ENCODE measurements at regions of chr1 and their contacts with region 1.

Region 1: GRCh38 chr1:162023547-162024501 is at the start of gene OLFML2B:
- DNase-seq: peak in 8 of 9 experiments; percentile 6 to 60 (median 39)
- ATAC-seq: peak; percentile 82
- H3K4me3 ChIP-seq: peak within 1 kb of the TSS; percentile 51 to 68
- H3K4me3 Mint-ChIP-seq: peak within 1 kb of the TSS; percentile 90
- H3K27ac ChIP-seq: no peak within 1 kb of the TSS
- H3K27ac Mint-ChIP-seq: no peak within 1 kb of the TSS
- H3K4me1 ChIP-seq: no peaks in the 10 kb centered on the region
- H3K4me1 Mint-ChIP-seq: peaks cover 12% of the 10 kb centered on the region
- H3K27me3 ChIP-seq: peaks cover 0 to 8% of the 10 kb centered on the region in 2 experiments
- H3K27me3 Mint-ChIP-seq: peaks cover 34% of the 10 kb centered on the region
- CTCF ChIP-seq: no peak
- total RNA-seq, gene OLFML2B: not detected

Region 2: GRCh38 chr1:161792740-161793139 is 231.1 kb before region 1 on chr1:
- CTCF ChIA-PET with region 1: interaction called, 12 read pairs
- POLR2A ChIA-PET with region 1: no interaction called
- intact Hi-C with region 1: no loop called
- DNase-seq: peak in 2 of 9 experiments; percentile 47 to 62
- ATAC-seq: peak; percentile 62
- H3K4me3 ChIP-seq: no peak overlapping the region
- H3K4me3 Mint-ChIP-seq: no peak overlapping the region
- H3K27ac ChIP-seq: no peak overlapping the region
- H3K27ac Mint-ChIP-seq: no peak overlapping the region
- H3K4me1 ChIP-seq: no peaks in the 10 kb centered on the region
- H3K4me1 Mint-ChIP-seq: peaks cover 2% of the 10 kb centered on the region
- H3K27me3 ChIP-seq: no peaks in the 10 kb centered on the region
- H3K27me3 Mint-ChIP-seq: no peaks in the 10 kb centered on the region
- CTCF ChIP-seq: peak; percentile 46

Region 3: GRCh38 chr1:161864577-161864976 is 159.2 kb before region 1 on chr1:
- CTCF ChIA-PET with region 1: interaction called, 6 read pairs
- POLR2A ChIA-PET with region 1: no interaction called
- intact Hi-C with region 1: loop called in 1 of 2 experiments (anchors 5 kb)
- DNase-seq: peak in 2 of 9 experiments; percentile 5 to 36
- ATAC-seq: no peak
- H3K4me3 ChIP-seq: no peak overlapping the region
- H3K4me3 Mint-ChIP-seq: no peak overlapping the region
- H3K27ac ChIP-seq: no peak overlapping the region
- H3K27ac Mint-ChIP-seq: no peak overlapping the region
- H3K4me1 ChIP-seq: no peaks in the 10 kb centered on the region
- H3K4me1 Mint-ChIP-seq: no peaks in the 10 kb centered on the region
- H3K27me3 ChIP-seq: no peaks in the 10 kb centered on the region
- H3K27me3 Mint-ChIP-seq: no peaks in the 10 kb centered on the region
- CTCF ChIP-seq: peak; percentile 32

Region 4: GRCh38 chr1:161905269-161905884 is 118.4 kb before region 1 on chr1:
- CTCF ChIA-PET with region 1: interaction called, 11 read pairs
- POLR2A ChIA-PET with region 1: no interaction called
- intact Hi-C with region 1: no loop called
- DNase-seq: peak in 4 of 9 experiments; percentile 4 to 46 (median 18)
- ATAC-seq: peak; percentile 69
- H3K4me3 ChIP-seq: no peak overlapping the region
- H3K4me3 Mint-ChIP-seq: no peak overlapping the region
- H3K27ac ChIP-seq: no peak overlapping the region
- H3K27ac Mint-ChIP-seq: no peak overlapping the region
- H3K4me1 ChIP-seq: no peaks in the 10 kb centered on the region
- H3K4me1 Mint-ChIP-seq: peaks cover 15% of the 10 kb centered on the region
- H3K27me3 ChIP-seq: no peaks in the 10 kb centered on the region
- H3K27me3 Mint-ChIP-seq: no peaks in the 10 kb centered on the region
- CTCF ChIP-seq: peak; percentile 76

Region 5: GRCh38 chr1:162035241-162035640 is 11.4 kb after region 1 on chr1:
- CTCF ChIA-PET with region 1: interaction called, 17 read pairs
- POLR2A ChIA-PET with region 1: interaction called, 3 read pairs
- intact Hi-C with region 1: no loop called
- DNase-seq: no peak
- ATAC-seq: no peak
- H3K4me3 ChIP-seq: no peak overlapping the region
- H3K4me3 Mint-ChIP-seq: no peak overlapping the region
- H3K27ac ChIP-seq: no peak overlapping the region
- H3K27ac Mint-ChIP-seq: no peak overlapping the region
- H3K4me1 ChIP-seq: no peaks in the 10 kb centered on the region
- H3K4me1 Mint-ChIP-seq: peaks cover 4% of the 10 kb centered on the region
- H3K27me3 ChIP-seq: no peaks in the 10 kb centered on the region
- H3K27me3 Mint-ChIP-seq: peaks cover 11% of the 10 kb centered on the region
- CTCF ChIP-seq: no peak

Region 6: DNA sequence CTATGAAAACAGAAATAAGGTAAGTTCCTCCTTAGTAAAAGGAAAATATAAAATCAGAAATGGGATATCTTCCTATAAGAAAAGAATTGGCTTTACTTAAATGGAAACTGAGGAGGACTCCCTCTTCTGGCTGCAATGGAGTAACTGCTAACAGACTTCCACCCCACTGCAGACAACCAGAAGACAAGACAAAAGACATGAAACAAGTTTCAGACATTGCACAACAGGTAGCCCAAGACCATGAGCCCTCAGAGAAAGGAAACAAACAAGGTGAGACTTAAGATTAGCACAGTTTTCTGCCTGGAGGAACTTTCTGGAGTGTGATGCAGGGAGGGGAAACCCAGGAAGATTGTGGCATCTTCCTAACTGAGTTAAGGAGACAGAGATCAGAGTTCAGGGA is 16.9 kb after region 1 on chr1:
- CTCF ChIA-PET with region 1: interaction called, 17 read pairs
- POLR2A ChIA-PET with region 1: interaction called, 3 read pairs
- intact Hi-C with region 1: no loop called
- DNase-seq: no peak
- ATAC-seq: no peak
- H3K4me3 ChIP-seq: no peak overlapping the region
- H3K4me3 Mint-ChIP-seq: no peak overlapping the region
- H3K27ac ChIP-seq: no peak overlapping the region
- H3K27ac Mint-ChIP-seq: no peak overlapping the region
- H3K4me1 ChIP-seq: no peaks in the 10 kb centered on the region
- H3K4me1 Mint-ChIP-seq: peaks cover 2% of the 10 kb centered on the region
- H3K27me3 ChIP-seq: no peaks in the 10 kb centered on the region
- H3K27me3 Mint-ChIP-seq: peaks cover 17% of the 10 kb centered on the region
- CTCF ChIP-seq: no peak